PC-9 (cell line): ENCODE measurements at regions of chr18 and their contacts with region 1.

Region 1: GRCh38 chr18:66548747-66549146 is 55.1 kb downstream of the CDH19 start:
- DNase-seq: no peak
- H3K4me3 ChIP-seq: no peak overlapping the region
- H3K27ac ChIP-seq: no peak overlapping the region
- H3K4me1 ChIP-seq: no peaks in the 10 kb centered on the region
- H3K27me3 ChIP-seq: no peaks in the 10 kb centered on the region
- CTCF ChIP-seq: no peak

Region 2: DNA sequence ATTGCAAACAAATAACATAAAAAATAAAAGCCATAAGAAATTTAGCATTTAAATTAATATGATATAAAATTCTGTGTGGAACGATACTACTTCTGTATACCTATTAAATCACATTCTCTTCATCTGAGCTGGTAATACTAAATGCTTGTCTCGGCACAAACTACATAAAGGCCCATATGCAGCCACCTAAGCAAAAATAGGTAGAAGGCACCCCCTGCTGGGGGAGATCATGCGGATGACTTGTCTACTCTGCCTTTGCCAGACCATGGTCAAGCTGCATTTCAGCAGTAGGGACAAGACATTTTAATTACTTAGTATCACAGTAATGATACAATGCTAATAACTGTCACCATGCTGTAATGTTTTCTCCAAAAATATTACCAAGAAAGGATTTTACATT is 52.9 kb before region 1 on chr18:
- CTCF ChIA-PET with region 1: no interaction called
- POLR2A ChIA-PET with region 1: no interaction called
- intact Hi-C with region 1: no loop called
- DNase-seq: peak; percentile 50 to 55
- H3K4me3 ChIP-seq: no peak overlapping the region
- H3K27ac ChIP-seq: no peak overlapping the region
- H3K4me1 ChIP-seq: no peaks in the 10 kb centered on the region
- H3K27me3 ChIP-seq: no peaks in the 10 kb centered on the region
- CTCF ChIP-seq: peak; percentile 75

Region 3: GRCh38 chr18:67977067-67977616 is 1428.4 kb after region 1 on chr18:
- CTCF ChIA-PET with region 1: interaction called, 25 read pairs
- POLR2A ChIA-PET with region 1: no interaction called
- intact Hi-C with region 1: no loop called
- DNase-seq: no peak
- H3K4me3 ChIP-seq: no peak overlapping the region
- H3K27ac ChIP-seq: no peak overlapping the region
- H3K4me1 ChIP-seq: no peaks in the 10 kb centered on the region
- H3K27me3 ChIP-seq: no peaks in the 10 kb centered on the region
- CTCF ChIP-seq: no peak